ENCODE measurements at regions of chr20 and their contacts with region 1.

Region 1: GRCh38 chr20:47356526-47357295 is at the start of gene ZMYND8:
- DNase-seq: peak; percentile 96
- H3K4me3 Mint-ChIP-seq: no peak within 1 kb of the TSS
- H3K27ac Mint-ChIP-seq: no peak within 1 kb of the TSS
- H3K4me1 Mint-ChIP-seq: no peaks in the 10 kb centered on the region
- H3K27me3 Mint-ChIP-seq: no peaks in the 10 kb centered on the region
- CTCF ChIP-seq: no peak
- total RNA-seq, gene ZMYND8: 53.1 and 77.3 TPM in 2 replicates

Region 2: DNA sequence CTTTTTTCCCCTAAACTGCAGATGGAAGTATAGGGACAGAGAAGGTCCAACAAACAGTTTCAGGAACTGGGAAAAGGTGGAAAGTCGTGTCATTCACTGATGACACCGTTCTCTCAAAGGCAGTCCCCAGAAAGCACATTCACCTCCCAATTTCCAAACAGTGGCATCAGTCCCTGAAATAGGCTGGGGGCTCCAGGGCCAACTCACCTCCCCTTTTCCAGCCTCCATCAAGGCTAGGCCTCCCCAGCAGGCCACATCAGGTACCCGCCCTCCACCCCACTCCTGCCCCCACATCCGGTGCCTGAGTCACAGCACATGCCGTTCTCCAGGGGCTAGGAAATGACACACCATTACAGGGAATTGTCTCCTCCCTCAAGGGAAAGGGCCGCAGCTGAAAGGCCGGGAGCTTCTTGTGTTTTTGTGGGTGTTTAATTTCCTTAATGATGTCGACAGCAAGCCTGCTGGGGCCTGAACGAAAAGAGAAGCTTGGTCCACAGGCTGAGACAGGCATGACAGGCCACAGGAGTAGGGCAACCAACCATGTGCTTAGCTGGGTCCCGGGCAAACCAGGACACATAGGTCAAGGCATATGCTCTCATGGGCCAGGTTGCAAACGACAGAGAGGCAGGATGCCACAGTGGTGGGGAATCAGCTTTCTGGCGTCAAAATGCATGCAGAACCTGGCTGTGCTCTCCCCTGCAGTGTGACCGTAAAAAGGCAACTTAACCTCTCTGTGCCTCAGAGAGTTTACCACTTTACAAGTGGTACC is 39.4 kb before region 1 on chr20:
- CTCF ChIA-PET with region 1: interaction called, 30 read pairs
- intact Hi-C with region 1: loop called (anchors 1 kb)
- DNase-seq: peak; percentile 87
- H3K4me3 Mint-ChIP-seq: peak overlapping the region; percentile 54
- H3K27ac Mint-ChIP-seq: peak overlapping the region; percentile 97
- H3K4me1 Mint-ChIP-seq: peaks cover 70% of the 10 kb centered on the region
- H3K27me3 Mint-ChIP-seq: no peaks in the 10 kb centered on the region
- CTCF ChIP-seq: no peak

Region 3: GRCh38 chr20:47334022-47334551 is 22.6 kb before region 1 on chr20:
- CTCF ChIA-PET with region 1: interaction called, 7 read pairs
- intact Hi-C with region 1: loop called (anchors 2 kb)
- DNase-seq: no peak
- H3K4me3 Mint-ChIP-seq: peak overlapping the region; percentile 50
- H3K27ac Mint-ChIP-seq: peak overlapping the region; percentile 41
- H3K4me1 Mint-ChIP-seq: peaks cover 61% of the 10 kb centered on the region
- H3K27me3 Mint-ChIP-seq: no peaks in the 10 kb centered on the region
- CTCF ChIP-seq: no peak

Region 4: GRCh38 chr20:47445291-47445690 is 88.6 kb after region 1 on chr20:
- CTCF ChIA-PET with region 1: interaction called, 13 read pairs
- intact Hi-C with region 1: no loop called
- DNase-seq: no peak
- H3K4me3 Mint-ChIP-seq: no peak overlapping the region
- H3K27ac Mint-ChIP-seq: no peak overlapping the region
- H3K4me1 Mint-ChIP-seq: peaks cover 9% of the 10 kb centered on the region
- H3K27me3 Mint-ChIP-seq: no peaks in the 10 kb centered on the region
- CTCF ChIP-seq: no peak

Region 5: GRCh38 chr20:47484303-47484702 is 127.6 kb after region 1 on chr20:
- CTCF ChIA-PET with region 1: no interaction called
- intact Hi-C with region 1: no loop called
- DNase-seq: no peak
- H3K4me3 Mint-ChIP-seq: no peak overlapping the region
- H3K27ac Mint-ChIP-seq: no peak overlapping the region
- H3K4me1 Mint-ChIP-seq: peaks cover 18% of the 10 kb centered on the region
- H3K27me3 Mint-ChIP-seq: no peaks in the 10 kb centered on the region
- CTCF ChIP-seq: no peak

Region 6: GRCh38 chr20:47704755-47705493 is 348.2 kb after region 1 on chr20:
- CTCF ChIA-PET with region 1: interaction called, 14 read pairs
- intact Hi-C with region 1: no loop called
- DNase-seq: no peak
- H3K4me3 Mint-ChIP-seq: no peak overlapping the region
- H3K27ac Mint-ChIP-seq: no peak overlapping the region
- H3K4me1 Mint-ChIP-seq: peaks cover 13% of the 10 kb centered on the region
- H3K27me3 Mint-ChIP-seq: no peaks in the 10 kb centered on the region
- CTCF ChIP-seq: no peak